PC-9 (cell line): ENCODE measurements at regions of chr14 and their contacts with region 1.

Region 1: DNA sequence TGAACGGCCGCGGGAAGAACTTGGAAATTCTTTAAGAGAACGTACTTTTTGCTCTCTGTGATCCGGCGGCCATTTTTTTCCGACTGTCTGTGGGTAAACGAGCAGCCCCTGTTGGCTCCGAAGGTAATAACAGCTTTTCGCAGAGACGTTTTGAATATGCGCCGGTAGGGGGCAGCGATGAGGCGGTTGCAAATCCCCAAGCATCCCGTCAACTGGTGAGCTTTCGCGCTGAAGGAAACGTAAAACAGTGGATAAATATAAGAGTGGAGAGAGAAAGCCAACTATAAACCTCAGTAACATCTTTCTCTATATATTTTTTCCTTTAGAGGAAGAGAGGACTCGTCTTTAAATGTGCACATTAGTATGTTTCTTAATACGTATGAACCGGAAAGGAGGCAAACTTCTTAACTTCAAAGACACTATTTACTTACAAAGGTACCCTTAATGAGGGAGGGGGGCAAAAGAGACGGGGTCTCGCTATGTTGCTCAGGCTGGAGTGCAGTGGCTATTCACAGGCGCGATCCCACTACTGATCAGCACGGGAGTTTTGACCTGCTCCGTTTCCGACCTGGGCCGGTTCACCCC is 9.6 kb upstream of the NEMF start:
- DNase-seq: peak; percentile 62 to 81
- H3K4me3 ChIP-seq: peak overlapping the region; percentile 100
- H3K27ac ChIP-seq: peak overlapping the region; percentile 92
- H3K4me1 ChIP-seq: peaks cover 35% of the 10 kb centered on the region; the same call in 1 of the 2 replicates
- H3K27me3 ChIP-seq: no peaks in the 10 kb centered on the region
- CTCF ChIP-seq: peak; percentile 100

Region 2: DNA sequence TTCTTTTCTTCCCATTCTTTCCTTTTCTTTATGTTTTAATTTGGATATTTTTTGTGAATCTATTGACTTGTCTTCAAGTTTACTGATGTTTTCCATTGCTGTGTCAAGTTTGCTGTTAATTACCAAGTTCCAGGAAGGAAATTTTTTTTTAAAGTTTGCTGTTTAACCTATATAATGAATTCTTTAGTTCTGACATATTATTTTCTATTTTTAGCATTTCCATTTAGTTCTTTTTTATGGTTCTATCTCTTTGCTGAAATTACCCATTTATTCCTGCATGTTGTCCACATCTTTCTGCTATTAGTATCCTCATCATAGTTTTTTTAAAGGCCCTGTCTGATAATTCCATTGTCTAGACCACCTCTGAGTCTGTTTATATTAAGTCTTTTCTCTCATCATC is 141.4 kb before region 1 on chr14:
- CTCF ChIA-PET with region 1: no interaction called
- POLR2A ChIA-PET with region 1: no interaction called
- intact Hi-C with region 1: no loop called
- DNase-seq: no peak
- H3K4me3 ChIP-seq: no peak overlapping the region
- H3K27ac ChIP-seq: no peak overlapping the region
- H3K4me1 ChIP-seq: no peaks in the 10 kb centered on the region
- H3K27me3 ChIP-seq: no peaks in the 10 kb centered on the region
- CTCF ChIP-seq: no peak

Region 3: GRCh38 chr14:49892636-49893308 is 30.6 kb after region 1 on chr14 and contains the start of gene ARF6:
- CTCF ChIA-PET with region 1: interaction called, 15 read pairs
- POLR2A ChIA-PET with region 1: interaction called, 10 read pairs
- intact Hi-C with region 1: loop called (anchors 1 kb)
- DNase-seq: peak; percentile 87 to 97
- H3K4me3 ChIP-seq: peak within 1 kb of the TSS; percentile 99
- H3K27ac ChIP-seq: peak within 1 kb of the TSS; percentile 96
- H3K4me1 ChIP-seq: peaks cover 28% of the 10 kb centered on the region
- H3K27me3 ChIP-seq: no peaks in the 10 kb centered on the region
- CTCF ChIP-seq: no peak; the same call in 1 of the 2 replicates
- total RNA-seq, gene ARF6: 46.8 and 65.3 TPM in 2 replicates

Region 4: DNA sequence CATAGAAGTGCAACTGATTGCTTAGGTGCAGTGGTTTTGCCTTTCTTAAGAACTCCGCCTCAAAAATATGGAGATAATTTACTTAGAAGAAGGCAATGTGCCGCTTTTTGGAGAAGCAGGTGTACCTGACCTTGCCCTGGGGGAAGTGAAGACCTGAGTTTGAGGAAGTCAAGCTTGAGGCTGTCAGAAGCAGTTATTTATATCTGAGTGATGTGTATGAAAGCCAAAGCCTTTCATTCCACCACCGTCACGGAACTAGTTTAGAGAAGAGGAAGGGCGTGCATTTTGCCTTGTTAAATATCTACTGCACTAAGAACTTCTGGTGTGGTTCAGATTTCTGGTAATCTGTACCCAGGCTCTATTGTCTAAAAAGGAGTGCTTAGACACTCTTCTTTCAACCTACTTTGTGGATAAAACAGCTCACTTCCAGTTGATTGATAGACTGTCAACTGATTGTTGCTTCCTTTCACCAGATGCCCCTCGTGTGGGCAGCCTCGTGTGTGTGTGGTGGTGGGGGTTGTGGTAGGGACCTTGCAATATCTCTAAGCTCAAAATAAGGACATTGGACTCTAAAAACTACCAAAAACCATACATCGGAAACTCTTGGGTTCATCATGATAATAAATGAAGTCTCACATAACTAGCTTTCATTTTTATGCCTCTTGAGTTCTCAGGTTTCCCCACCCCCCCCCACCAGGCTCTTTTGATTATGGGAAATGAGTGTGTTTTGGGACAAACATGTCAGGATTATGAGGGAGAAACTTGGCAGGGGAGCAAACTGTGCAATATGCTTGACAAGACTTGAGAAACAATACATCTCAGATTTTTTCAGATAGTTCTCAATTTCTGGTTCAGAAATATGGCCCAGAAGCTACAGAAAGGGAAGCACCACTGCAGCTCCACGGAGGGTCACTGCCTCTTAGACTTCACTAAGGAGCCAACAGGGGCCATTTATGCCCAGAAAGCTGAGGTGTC is 109.3 kb after region 1 on chr14:
- CTCF ChIA-PET with region 1: no interaction called
- POLR2A ChIA-PET with region 1: interaction called, 12 read pairs
- intact Hi-C with region 1: no loop called
- DNase-seq: no peak
- H3K4me3 ChIP-seq: peak overlapping the region; percentile 40; the same call in 1 of the 2 replicates
- H3K27ac ChIP-seq: peak overlapping the region; percentile 97
- H3K4me1 ChIP-seq: peaks cover 81% of the 10 kb centered on the region
- H3K27me3 ChIP-seq: no peaks in the 10 kb centered on the region
- CTCF ChIP-seq: no peak

Region 5: DNA sequence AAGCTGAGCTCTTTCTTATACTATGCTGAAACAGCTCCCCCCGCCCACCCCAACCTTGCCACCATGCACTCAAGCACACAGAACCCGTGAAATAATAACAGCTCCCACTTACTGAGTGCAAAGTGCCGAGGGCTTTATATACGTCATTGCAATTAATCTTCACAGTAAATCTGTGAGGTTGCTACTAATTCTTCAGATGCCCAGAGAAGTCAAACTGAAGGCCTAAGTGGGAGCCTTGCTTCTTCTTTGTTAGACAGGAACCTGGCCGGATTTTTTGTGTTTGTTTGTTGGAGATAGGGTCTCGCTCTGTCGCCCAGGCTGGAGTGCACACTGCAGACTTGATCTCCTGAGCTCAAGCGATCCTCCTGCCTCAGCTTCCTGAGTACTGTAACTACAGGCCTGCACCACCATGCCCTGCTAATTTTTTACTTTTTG is 220.1 kb after region 1 on chr14:
- CTCF ChIA-PET with region 1: no interaction called
- POLR2A ChIA-PET with region 1: interaction called, 29 read pairs
- intact Hi-C with region 1: no loop called
- DNase-seq: no peak
- H3K4me3 ChIP-seq: no peak overlapping the region
- H3K27ac ChIP-seq: no peak overlapping the region
- H3K4me1 ChIP-seq: no peaks in the 10 kb centered on the region; the same call in 1 of the 2 replicates
- H3K27me3 ChIP-seq: no peaks in the 10 kb centered on the region
- CTCF ChIP-seq: no peak

Region 6: GRCh38 chr14:50109342-50109741 is 247.2 kb after region 1 on chr14:
- CTCF ChIA-PET with region 1: interaction called, 10 read pairs
- POLR2A ChIA-PET with region 1: interaction called, 4 read pairs
- intact Hi-C with region 1: loop called (anchors 1 kb)
- DNase-seq: no peak
- H3K4me3 ChIP-seq: no peak overlapping the region
- H3K27ac ChIP-seq: no peak overlapping the region
- H3K4me1 ChIP-seq: peaks cover 7% of the 10 kb centered on the region; the same call in 1 of the 2 replicates
- H3K27me3 ChIP-seq: no peaks in the 10 kb centered on the region
- CTCF ChIP-seq: peak; percentile 34

Region 7: GRCh38 chr14:50191499-50191898 is 329.3 kb after region 1 on chr14:
- CTCF ChIA-PET with region 1: no interaction called
- POLR2A ChIA-PET with region 1: no interaction called
- intact Hi-C with region 1: no loop called
- DNase-seq: no peak
- H3K4me3 ChIP-seq: no peak overlapping the region
- H3K27ac ChIP-seq: no peak overlapping the region
- H3K4me1 ChIP-seq: no peaks in the 10 kb centered on the region
- H3K27me3 ChIP-seq: no peaks in the 10 kb centered on the region
- CTCF ChIP-seq: no peak

Region 8: DNA sequence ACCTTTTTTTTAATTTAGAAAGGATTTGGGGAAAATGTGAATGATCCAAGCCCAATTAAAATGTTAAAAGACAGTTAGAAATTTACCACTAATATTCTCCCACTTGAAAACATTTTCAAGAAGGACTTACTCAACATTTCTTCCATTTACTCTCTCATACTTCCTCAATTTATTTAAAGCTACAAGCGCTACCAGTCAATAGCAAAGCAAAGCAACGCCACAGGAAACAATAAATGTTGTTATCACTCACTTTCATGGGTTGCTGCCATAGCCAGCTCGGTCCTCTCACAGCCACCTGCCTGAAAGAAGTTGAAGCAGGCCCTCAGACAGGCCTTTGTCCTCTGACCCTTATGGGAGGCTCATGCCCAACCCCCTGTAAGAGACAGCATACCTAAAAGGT is 375.2 kb after region 1 on chr14:
- CTCF ChIA-PET with region 1: no interaction called
- POLR2A ChIA-PET with region 1: no interaction called
- intact Hi-C with region 1: no loop called
- DNase-seq: no peak
- H3K4me3 ChIP-seq: no peak overlapping the region
- H3K27ac ChIP-seq: no peak overlapping the region
- H3K4me1 ChIP-seq: 0 out of 2 replicates have a peak, but pooled peaks cover 1% of the 10 kb centered on the region
- H3K27me3 ChIP-seq: no peaks in the 10 kb centered on the region
- CTCF ChIP-seq: no peak

Region 9: GRCh38 chr14:50545619-50546018 is 683.4 kb after region 1 on chr14:
- CTCF ChIA-PET with region 1: no interaction called
- POLR2A ChIA-PET with region 1: no interaction called
- intact Hi-C with region 1: no loop called
- DNase-seq: peak in 1 of 2 experiments; percentile 39
- H3K4me3 ChIP-seq: no peak overlapping the region
- H3K27ac ChIP-seq: no peak overlapping the region
- H3K4me1 ChIP-seq: peaks cover 7% of the 10 kb centered on the region; the same call in 1 of the 2 replicates
- H3K27me3 ChIP-seq: no peaks in the 10 kb centered on the region
- CTCF ChIP-seq: no peak